T-cell (primary cell): ENCODE measurements at regions of chr20 and their contacts with region 1.

Region 1: DNA sequence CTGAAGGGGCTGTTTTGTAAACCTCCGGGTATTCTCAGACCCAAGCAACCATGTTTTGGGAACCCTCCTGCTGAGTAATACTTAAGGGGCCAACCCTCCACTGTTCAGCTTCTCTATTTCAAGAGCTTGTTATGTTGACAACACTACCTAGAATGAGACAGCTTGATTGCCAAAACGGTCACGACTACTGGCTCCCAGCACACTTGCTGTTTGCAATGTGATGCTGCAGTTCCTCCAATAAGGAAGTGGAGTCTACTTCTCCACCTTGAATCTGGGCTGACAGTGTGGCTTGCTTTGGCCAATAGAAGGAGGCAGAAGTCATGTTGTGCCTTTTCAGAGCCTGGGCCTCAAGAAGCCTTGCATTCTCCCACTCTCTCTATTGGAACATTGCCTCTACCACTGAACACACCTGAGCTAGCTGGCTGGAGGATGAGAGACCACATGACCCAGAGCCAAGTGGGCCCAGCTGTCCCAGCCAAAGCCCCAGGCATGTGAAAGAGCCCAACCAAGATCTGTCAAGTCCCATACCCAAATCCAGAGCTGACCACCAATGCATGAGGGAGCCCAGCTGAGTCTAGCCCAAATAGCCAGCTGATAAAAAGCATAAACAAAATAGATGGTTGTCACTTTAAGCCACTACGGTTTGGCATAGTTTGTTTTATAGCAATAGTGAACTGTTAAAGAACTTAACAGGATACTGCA is 108.0 kb downstream of the PRND start:
- DNase-seq: peak in 1 of 35 experiments; percentile 37
- ATAC-seq: no peak
- H3K4me3 ChIP-seq: no peak overlapping the region
- H3K4me3 Mint-ChIP-seq: no peak overlapping the region
- H3K27ac ChIP-seq: no peak overlapping the region
- H3K27ac Mint-ChIP-seq: peak overlapping the region in 1 of 2 donors; percentile 34
- H3K4me1 ChIP-seq: no peaks in the 10 kb centered on the region
- H3K4me1 Mint-ChIP-seq: no peaks in the 10 kb centered on the region
- H3K27me3 ChIP-seq: peaks cover 0 to 5% of the 10 kb centered on the region in 2 experiments
- H3K27me3 Mint-ChIP-seq: no peaks in the 10 kb centered on the region

Region 2: GRCh38 chr20:4800131-4800530 is 29.5 kb before region 1 on chr20:
- CTCF ChIA-PET with region 1: interaction called, 3 to 10 read pairs
- POLR2A ChIA-PET with region 1: no interaction called
- DNase-seq: no peak
- ATAC-seq: no peak
- H3K4me3 ChIP-seq: no peak overlapping the region
- H3K4me3 Mint-ChIP-seq: no peak overlapping the region
- H3K27ac ChIP-seq: no peak overlapping the region
- H3K27ac Mint-ChIP-seq: peak overlapping the region in 1 of 2 donors; percentile 1
- H3K4me1 ChIP-seq: peaks cover 0 to 8% of the 10 kb centered on the region in 2 experiments
- H3K4me1 Mint-ChIP-seq: peaks cover 10 to 21% (median 14%) of the 10 kb centered on the region in 3 donors
- H3K27me3 ChIP-seq: no peaks in the 10 kb centered on the region
- H3K27me3 Mint-ChIP-seq: no peaks in the 10 kb centered on the region